ENCODE measurements at regions of chr19 and their contacts with region 1.

Region 1: DNA sequence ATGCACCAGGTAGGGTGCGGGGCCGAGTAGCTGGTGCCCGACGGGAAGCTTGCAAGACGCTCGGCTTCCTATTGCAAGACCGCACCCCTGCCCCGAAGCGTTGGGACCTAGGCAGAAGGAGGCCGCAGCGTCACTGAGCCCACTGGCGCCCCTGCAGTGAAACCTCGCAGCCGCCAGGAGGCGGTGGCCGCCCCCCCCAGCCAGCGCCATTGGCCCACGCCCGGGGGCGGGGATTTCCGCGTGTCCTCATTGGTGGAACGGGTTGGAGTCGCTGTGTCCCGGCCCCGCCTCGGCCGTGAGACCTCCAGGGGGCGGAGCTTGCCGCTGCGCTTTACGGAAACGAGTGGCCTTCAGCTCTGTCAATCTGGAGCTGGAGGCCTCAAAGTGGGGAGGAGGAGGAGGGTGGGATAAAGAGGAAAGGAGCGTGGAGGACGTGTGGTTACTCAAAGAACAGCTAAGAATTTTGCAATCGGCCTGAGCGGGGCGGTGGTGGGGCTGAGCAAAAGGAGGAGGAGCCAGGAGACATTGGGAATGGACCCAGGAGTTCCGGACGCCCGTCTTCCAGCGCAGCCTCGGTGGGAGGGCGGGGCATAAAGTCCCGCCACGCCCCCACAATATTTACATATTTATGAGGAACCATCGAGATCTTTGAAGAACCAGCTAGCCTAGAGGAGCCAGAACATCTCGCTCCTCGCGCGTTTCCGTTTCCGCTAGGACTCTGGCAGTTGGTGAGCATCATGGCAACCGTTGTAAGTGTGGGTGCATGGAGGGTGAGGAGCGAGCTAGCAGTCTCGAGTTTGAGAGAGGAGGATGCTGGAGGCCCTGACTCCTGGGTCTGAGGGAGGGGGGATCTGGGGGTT is at the starts of genes GYS1 and RUVBL2:
- DNase-seq: peak; percentile 98 to 99 (median 99)
- H3K4me3 ChIP-seq: peak within 1 kb of the TSS; percentile 87
- H3K4me3 Mint-ChIP-seq: peak within 1 kb of the TSS; percentile 88 to 97 (median 96)
- H3K27ac ChIP-seq: peak within 1 kb of the TSS; percentile 85
- H3K27ac Mint-ChIP-seq: peak within 1 kb of the TSS; percentile 88 to 100 (median 98)
- H3K4me1 ChIP-seq: peaks cover 27% of the 10 kb centered on the region
- H3K4me1 Mint-ChIP-seq: peaks cover 28 to 54% (median 41%) of the 10 kb centered on the region in 3 donors
- H3K27me3 ChIP-seq: no peaks in the 10 kb centered on the region
- H3K27me3 Mint-ChIP-seq: peaks cover 0 to 2% of the 10 kb centered on the region in 2 donors
- total RNA-seq, gene GYS1: 38.2 to 38.9 TPM
- total RNA-seq, gene RUVBL2: 147 to 159 TPM

Region 2: DNA sequence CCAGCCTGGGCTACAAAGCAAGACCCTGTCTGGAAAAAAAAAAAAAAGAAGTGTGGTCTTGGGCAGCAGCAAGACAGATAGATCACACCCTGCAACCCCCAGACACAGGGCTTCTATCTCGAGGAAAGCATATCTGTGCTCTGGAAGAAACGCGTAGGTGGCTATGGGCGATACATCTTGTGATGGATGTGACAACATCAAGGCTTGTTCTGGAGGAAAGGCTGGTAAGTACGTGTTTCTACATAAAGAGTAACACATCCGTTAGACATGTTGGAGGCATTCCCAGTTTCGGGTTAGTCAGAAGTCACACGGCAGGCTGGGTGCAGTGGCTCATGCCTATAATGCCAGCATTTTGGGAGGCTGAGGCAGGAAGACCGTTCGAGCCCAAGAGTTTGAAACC is 66.5 kb before region 1 on chr19:
- CTCF ChIA-PET with region 1: no interaction called
- POLR2A ChIA-PET with region 1: no interaction called
- DNase-seq: peak in 1 of 5 donors; percentile 11
- H3K4me3 ChIP-seq: no peak overlapping the region
- H3K4me3 Mint-ChIP-seq: peak overlapping the region in 3 of 7 donors; percentile 22 to 61 (median 32)
- H3K27ac ChIP-seq: no peak overlapping the region
- H3K27ac Mint-ChIP-seq: peak overlapping the region in 2 of 8 donors; percentile 47 to 58
- H3K4me1 ChIP-seq: no peaks in the 10 kb centered on the region
- H3K4me1 Mint-ChIP-seq: peaks cover 0 to 4% (median 0%) of the 10 kb centered on the region in 3 donors
- H3K27me3 ChIP-seq: no peaks in the 10 kb centered on the region
- H3K27me3 Mint-ChIP-seq: no peaks in the 10 kb centered on the region

Region 3: GRCh38 chr19:48965040-48965805 is 28.2 kb before region 1 on chr19 and contains the start of gene FTL:
- CTCF ChIA-PET with region 1: interaction called, 20 read pairs
- POLR2A ChIA-PET with region 1: interaction called, 18 read pairs
- DNase-seq: peak; percentile 76 to 90 (median 85)
- H3K4me3 ChIP-seq: peak within 1 kb of the TSS; percentile 88
- H3K4me3 Mint-ChIP-seq: peak within 1 kb of the TSS; percentile 91 to 100 (median 100)
- H3K27ac ChIP-seq: peak within 1 kb of the TSS; percentile 94
- H3K27ac Mint-ChIP-seq: peak within 1 kb of the TSS; percentile 90 to 99 (median 97)
- H3K4me1 ChIP-seq: peaks cover 42% of the 10 kb centered on the region
- H3K4me1 Mint-ChIP-seq: peaks cover 50 to 76% (median 59%) of the 10 kb centered on the region in 3 donors
- H3K27me3 ChIP-seq: no peaks in the 10 kb centered on the region
- H3K27me3 Mint-ChIP-seq: peaks cover 0 to 9% of the 10 kb centered on the region in 2 donors
- total RNA-seq, gene FTL: 1,478 to 1,489 TPM

Region 4: DNA sequence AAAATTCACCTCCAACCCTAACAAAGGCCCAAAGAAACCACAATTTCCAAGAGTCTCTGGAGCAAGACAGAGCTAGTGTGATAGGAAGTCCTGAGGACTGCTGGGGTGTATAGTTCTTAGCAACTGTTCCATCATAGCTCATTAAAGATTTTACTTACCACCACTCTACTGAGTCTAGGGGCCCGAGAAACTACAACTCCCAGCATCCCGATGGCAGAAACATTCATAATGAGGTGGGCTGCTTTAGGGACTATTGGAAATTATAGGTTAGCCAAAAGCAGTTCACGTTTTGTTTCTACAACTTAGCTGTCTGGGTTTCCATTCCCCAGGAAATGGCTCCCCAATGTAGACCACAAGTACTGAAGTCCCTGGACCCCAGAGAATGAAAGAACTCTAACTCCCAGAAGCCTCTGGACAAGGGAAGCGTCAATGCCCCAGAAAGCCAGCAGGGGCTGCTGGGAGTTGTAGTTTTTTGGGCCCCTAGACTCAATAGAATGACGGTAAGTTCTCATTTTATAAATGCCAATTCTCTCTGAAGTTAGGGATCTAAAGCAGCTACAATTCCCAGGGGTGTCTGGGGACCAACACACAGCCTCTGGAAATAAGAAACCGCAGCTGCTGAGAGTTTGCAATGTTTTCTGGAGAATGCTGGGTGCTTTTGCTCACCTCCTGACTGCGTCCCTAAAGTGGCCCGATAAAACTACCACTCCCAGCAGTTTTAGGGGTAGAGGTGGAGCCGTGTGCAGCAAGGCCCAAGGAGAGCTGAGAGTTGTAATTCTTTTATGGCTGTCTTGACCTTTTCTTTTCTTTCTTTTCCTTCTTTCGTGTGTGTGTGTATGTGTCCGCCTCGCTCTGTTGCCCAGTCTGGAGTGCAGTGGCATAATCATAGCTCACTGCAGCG is 17.2 kb before region 1 on chr19:
- CTCF ChIA-PET with region 1: interaction called, 25 read pairs
- POLR2A ChIA-PET with region 1: interaction called, 3 read pairs
- DNase-seq: peak in 2 of 5 donors; percentile 34 to 51
- H3K4me3 ChIP-seq: no peak overlapping the region
- H3K4me3 Mint-ChIP-seq: no peak overlapping the region
- H3K27ac ChIP-seq: no peak overlapping the region
- H3K27ac Mint-ChIP-seq: peak overlapping the region in 1 of 8 donors; percentile 39
- H3K4me1 ChIP-seq: no peaks in the 10 kb centered on the region
- H3K4me1 Mint-ChIP-seq: peaks cover under 1 to 6% (median under 1%) of the 10 kb centered on the region in 3 donors
- H3K27me3 ChIP-seq: no peaks in the 10 kb centered on the region
- H3K27me3 Mint-ChIP-seq: no peaks in the 10 kb centered on the region

Region 5: GRCh38 chr19:49017666-49018351 is 24.4 kb after region 1 on chr19:
- CTCF ChIA-PET with region 1: interaction called, 25 read pairs
- POLR2A ChIA-PET with region 1: interaction called, 10 read pairs
- DNase-seq: peak; percentile 54 to 80 (median 65)
- H3K4me3 ChIP-seq: peak overlapping the region; percentile 61
- H3K4me3 Mint-ChIP-seq: peak overlapping the region; percentile 77 to 94 (median 89)
- H3K27ac ChIP-seq: no peak overlapping the region
- H3K27ac Mint-ChIP-seq: peak overlapping the region in 7 of 8 donors; percentile 17 to 92 (median 68)
- H3K4me1 ChIP-seq: peaks cover 6% of the 10 kb centered on the region
- H3K4me1 Mint-ChIP-seq: peaks cover 21 to 42% (median 23%) of the 10 kb centered on the region in 3 donors
- H3K27me3 ChIP-seq: no peaks in the 10 kb centered on the region
- H3K27me3 Mint-ChIP-seq: no peaks in the 10 kb centered on the region

Measured in CD8-positive, alpha-beta memory T cell (primary cell).